Caco-2 (cell line): ENCODE measurements at regions of chr5 and their contacts with region 1.

Region 1: DNA sequence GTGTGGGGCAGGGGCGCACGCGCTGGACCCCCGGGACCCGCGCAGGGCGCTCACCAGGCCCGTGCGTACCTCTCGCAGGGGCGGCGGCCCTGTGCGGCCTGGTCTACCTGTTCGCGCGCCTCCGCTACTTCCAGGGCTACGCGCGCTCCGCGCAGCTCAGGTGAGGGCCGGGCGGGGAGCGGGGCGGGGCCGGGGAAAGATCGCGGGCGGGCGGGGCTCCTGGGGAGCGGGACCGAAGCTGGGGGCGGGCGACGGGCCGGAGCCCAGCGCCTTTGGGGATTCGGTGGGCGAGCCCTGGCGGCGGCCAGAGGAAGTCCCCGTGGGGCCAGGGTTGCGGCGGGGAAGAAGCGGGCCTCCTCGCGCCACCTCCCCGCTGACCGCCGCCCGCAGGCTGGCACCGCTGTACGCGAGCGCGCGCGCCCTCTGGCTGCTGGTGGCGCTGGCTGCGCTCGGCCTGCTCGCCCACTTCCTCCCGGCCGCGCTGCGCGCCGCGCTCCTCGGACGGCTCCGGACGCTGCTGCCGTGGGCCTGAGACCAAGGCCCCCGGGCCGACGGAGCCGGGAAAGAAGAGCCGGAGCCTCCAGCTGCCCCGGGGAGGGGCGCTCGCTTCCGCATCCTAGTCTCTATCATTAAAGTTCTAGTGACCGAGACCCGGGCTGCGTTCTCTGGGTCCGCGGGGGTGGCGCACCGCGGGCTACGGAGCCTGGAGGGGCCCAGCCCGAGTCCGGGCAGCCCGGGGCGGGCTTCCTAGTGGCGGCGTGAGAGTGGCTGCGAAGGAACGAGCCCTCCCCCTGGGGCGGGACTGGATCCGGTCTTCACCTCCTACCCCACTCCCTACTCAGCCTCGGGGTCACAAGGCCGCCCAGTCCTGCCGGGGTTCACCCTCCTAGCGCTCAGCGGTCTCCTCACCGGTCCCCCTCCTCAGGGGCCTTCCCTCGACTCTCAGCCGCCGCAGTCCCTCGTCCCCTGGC is 2.4 kb downstream of the LTC4S start:
- DNase-seq: peak; percentile 91 to 95
- H3K4me3 ChIP-seq: peak overlapping the region; percentile 77
- H3K4me3 Mint-ChIP-seq: peak overlapping the region; percentile 74
- H3K27ac Mint-ChIP-seq: peak overlapping the region; percentile 62
- H3K4me1 ChIP-seq: peaks cover 14% of the 10 kb centered on the region; the same call in 1 of the 2 replicates
- H3K4me1 Mint-ChIP-seq: peaks cover 7% of the 10 kb centered on the region
- H3K27me3 ChIP-seq: no peaks in the 10 kb centered on the region
- H3K27me3 Mint-ChIP-seq: no peaks in the 10 kb centered on the region
- CTCF ChIP-seq: peak; percentile 49 to 71

Region 2: GRCh38 chr5:179678223-179679013 is 117.7 kb before region 1 on chr5:
- CTCF ChIA-PET with region 1: interaction called, 3 read pairs
- POLR2A ChIA-PET with region 1: interaction called, 5 read pairs
- intact Hi-C with region 1: loop called (anchors 10 kb)
- DNase-seq: peak; percentile 95 to 96
- H3K4me3 ChIP-seq: peak overlapping the region; percentile 72
- H3K4me3 Mint-ChIP-seq: peak overlapping the region; percentile 98
- H3K27ac Mint-ChIP-seq: peak overlapping the region; percentile 97
- H3K4me1 ChIP-seq: peaks cover 11% of the 10 kb centered on the region
- H3K4me1 Mint-ChIP-seq: peaks cover 21% of the 10 kb centered on the region
- H3K27me3 ChIP-seq: no peaks in the 10 kb centered on the region
- H3K27me3 Mint-ChIP-seq: no peaks in the 10 kb centered on the region
- CTCF ChIP-seq: no peak

Region 3: DNA sequence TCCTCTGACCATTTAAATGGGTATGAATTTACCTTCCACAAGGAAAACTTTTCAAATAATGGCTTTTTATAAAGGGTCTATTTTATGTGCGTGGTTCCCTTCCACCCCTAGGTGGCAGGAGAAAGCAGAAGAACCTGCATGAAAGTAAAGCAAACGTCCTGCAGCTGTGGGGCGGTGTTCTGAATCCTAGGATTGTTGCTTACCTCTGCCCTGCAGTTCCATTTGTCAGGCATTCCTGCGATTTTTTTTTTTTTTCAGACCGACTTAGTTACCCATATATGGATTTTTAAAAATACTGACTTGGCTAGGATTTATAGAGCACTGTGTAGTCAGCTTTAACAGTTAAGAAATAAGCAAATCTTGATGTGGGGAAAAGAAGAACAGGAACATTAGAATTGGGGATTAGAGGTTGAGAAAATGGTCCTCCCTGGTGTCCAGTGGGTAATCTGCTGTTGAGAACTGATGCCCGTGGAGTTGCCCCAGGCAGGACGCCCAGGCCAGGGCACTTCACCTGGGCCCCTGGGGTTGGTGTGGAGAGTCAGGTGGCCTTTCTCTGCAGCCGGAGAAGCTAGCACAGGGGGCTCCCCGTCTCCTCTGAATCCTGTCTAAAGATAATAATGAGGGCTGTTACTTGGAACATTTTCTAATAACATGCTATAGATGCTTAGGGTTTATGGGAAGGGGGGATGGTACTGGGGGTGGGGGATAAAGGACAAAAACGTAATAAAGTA is 32.8 kb before region 1 on chr5:
- CTCF ChIA-PET with region 1: interaction called, 11 read pairs
- POLR2A ChIA-PET with region 1: interaction called, 3 read pairs
- intact Hi-C with region 1: loop called (anchors 1 kb)
- DNase-seq: peak; percentile 82
- H3K4me3 ChIP-seq: no peak overlapping the region
- H3K4me3 Mint-ChIP-seq: no peak overlapping the region
- H3K27ac Mint-ChIP-seq: peak overlapping the region; percentile 81
- H3K4me1 ChIP-seq: peaks cover 12% of the 10 kb centered on the region
- H3K4me1 Mint-ChIP-seq: peaks cover 31% of the 10 kb centered on the region
- H3K27me3 ChIP-seq: no peaks in the 10 kb centered on the region
- H3K27me3 Mint-ChIP-seq: no peaks in the 10 kb centered on the region
- CTCF ChIP-seq: peak; percentile 84 to 96

Region 4: DNA sequence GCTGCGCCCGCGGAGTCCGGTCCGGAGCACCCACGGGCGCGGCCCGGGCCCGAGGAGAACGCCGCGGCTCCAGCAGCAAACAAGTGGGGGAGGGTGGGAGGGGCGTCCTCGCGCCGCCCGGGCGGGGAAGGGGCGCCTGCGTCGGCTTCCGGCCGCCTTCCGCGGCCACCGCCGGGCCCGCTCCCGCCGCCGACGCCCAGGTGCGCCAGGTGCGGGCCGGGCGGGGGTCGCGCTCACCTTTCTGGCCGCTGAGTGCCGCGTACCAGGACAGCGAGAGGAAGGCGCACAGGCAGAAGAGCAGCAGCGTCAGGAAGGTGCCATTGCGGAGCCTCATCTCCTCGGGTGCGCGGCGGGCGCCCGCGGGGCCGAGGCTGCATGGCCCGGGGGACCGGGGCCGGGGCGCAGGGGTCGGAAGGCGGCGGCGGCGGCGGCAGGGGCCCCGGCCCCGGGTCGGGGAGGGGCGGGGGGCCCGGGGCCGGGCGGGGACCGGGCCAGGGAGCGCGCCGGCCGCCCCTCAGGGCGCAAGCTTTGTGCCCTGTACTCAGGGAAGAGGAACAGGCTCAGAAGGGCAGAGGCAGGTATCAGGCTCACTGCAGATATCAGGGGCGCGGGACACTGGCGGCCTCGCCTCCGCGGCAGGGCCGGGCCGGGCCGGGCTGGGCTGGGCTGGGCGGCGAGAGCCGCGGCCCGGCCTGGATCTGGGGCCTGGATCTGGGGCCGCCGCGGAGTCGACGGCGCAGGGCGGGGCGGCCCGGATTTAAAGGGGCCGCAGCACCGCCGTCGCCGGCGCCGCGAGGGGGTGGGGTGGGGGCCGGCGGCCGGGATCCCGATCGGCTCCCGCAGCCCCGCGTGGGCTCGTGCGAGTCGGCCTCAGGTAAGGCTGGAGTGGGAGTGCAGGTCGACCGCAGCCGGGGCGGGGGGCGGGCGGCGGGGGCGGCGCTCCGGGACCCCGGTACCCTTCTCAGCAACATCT is 10.4 kb after region 1 on chr5 and contains the start of gene MGAT4B:
- CTCF ChIA-PET with region 1: no interaction called
- POLR2A ChIA-PET with region 1: no interaction called
- intact Hi-C with region 1: no loop called
- DNase-seq: peak; percentile 71 to 86
- H3K4me3 ChIP-seq: peak within 1 kb of the TSS; percentile 97
- H3K4me3 Mint-ChIP-seq: peak within 1 kb of the TSS; percentile 72
- H3K27ac Mint-ChIP-seq: peak within 1 kb of the TSS; percentile 84
- H3K4me1 ChIP-seq: peaks cover 18% of the 10 kb centered on the region
- H3K4me1 Mint-ChIP-seq: peaks cover 13% of the 10 kb centered on the region
- H3K27me3 ChIP-seq: no peaks in the 10 kb centered on the region
- H3K27me3 Mint-ChIP-seq: no peaks in the 10 kb centered on the region
- CTCF ChIP-seq: no peak
- total RNA-seq, gene MGAT4B: 215 and 217 TPM in 2 replicates

Region 5: DNA sequence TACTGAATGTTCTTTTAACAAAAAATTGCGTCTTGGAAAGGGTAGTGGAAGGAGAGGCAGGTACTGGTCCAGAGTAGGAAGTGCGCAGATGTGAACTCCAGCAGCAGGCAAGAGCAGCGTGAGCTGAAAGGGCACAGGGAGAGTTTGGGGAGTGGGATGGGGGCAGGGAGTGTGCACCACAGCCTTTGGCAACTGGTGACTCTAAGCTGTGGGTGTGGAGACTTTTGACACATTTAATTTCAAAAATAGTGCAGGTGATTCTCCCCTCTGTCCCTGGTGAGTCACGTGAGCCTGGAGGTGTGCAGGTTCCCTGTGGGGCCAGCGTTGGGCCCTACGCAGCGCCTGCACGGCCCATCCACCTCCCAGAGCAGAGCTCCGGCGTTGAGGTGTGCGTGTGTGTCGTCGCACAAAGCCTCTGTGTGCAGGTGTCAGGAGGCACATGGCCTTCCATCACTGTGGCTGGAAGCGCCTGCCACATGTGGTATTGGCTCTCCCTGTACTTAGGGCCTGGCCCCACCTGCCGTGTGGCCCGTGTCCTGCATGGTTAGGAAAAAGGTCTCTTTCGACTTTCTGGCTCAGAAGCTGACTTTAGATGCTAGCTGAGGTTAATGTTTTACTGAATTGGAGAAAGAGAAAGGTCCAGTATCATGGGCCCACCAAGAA is 36.1 kb after region 1 on chr5:
- CTCF ChIA-PET with region 1: interaction called, 11 read pairs
- POLR2A ChIA-PET with region 1: no interaction called
- intact Hi-C with region 1: no loop called
- DNase-seq: no peak
- H3K4me3 ChIP-seq: no peak overlapping the region
- H3K4me3 Mint-ChIP-seq: no peak overlapping the region
- H3K27ac Mint-ChIP-seq: peak overlapping the region; percentile 45
- H3K4me1 ChIP-seq: no peaks in the 10 kb centered on the region
- H3K4me1 Mint-ChIP-seq: no peaks in the 10 kb centered on the region
- H3K27me3 ChIP-seq: no peaks in the 10 kb centered on the region
- H3K27me3 Mint-ChIP-seq: no peaks in the 10 kb centered on the region
- CTCF ChIP-seq: no peak

Region 6: DNA sequence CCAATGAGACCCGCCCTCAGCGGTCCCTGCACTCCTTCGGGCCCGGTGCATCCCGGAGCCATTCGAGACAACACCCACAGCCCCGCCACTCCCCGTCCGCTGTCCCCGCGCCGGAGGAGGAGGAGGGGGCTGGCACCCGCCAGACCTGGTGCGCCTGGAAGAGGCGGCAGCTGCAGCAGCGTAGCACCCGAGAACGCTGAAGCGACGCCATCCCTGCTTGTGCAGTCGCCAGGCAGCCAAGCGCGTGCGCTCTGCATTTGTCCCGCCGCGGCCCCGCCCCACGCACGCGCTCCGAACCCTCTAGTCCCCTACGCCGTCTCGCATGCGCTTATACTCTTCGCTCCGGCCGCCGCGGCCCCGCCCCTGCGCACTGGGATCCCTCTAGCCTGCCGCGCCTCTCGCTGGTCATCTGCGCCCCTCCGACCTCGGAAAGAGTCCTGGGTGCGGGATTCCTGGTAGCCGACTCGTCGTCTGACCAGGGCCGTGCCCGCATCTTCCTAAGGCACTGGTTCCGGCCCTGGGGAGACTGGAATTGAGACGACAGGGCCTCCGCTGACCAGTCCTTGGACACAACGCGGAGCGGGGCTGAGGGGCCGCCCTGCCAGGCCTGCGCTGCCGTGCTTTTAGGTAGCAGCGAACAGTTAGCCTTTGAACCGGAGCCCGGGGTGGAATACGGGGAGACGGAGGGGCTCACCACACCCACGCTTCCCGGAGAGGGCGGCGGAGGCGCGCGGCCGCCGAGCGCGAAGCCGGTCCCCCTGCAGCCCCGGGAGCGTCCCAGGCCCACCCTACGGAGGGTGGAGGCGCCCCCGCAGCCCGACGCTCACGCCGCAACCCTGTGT is 62.7 kb after region 1 on chr5 and contains the start of gene MRNIP:
- CTCF ChIA-PET with region 1: no interaction called
- POLR2A ChIA-PET with region 1: no interaction called
- intact Hi-C with region 1: no loop called
- DNase-seq: peak; percentile 96 to 97
- H3K4me3 ChIP-seq: peak within 1 kb of the TSS; percentile 100
- H3K4me3 Mint-ChIP-seq: peak within 1 kb of the TSS; percentile 84
- H3K27ac Mint-ChIP-seq: peak within 1 kb of the TSS; percentile 87
- H3K4me1 ChIP-seq: no peaks in the 10 kb centered on the region
- H3K4me1 Mint-ChIP-seq: no peaks in the 10 kb centered on the region
- H3K27me3 ChIP-seq: no peaks in the 10 kb centered on the region
- H3K27me3 Mint-ChIP-seq: no peaks in the 10 kb centered on the region
- CTCF ChIP-seq: peak in 1 of 2 experiments; percentile 25
- total RNA-seq, gene MRNIP: 37.8 and 43.0 TPM in 2 replicates